Adrenal gland (tissue), 19 donors: ENCODE measurements at regions of chr22 and their contacts with region 1.

Region 1: GRCh38 chr22:24951942-24952836 is at the start of gene KIAA1671:
- DNase-seq: peak; percentile 89 to 94 (median 92)
- H3K4me3 ChIP-seq: peak within 1 kb of the TSS; percentile 47 to 92 (median 68)
- H3K27ac ChIP-seq: peak within 1 kb of the TSS; percentile 85 to 96 (median 87)
- H3K4me1 ChIP-seq: peaks cover 23 to 24% of the 10 kb centered on the region in 2 donors
- H3K27me3 ChIP-seq: no peaks in the 10 kb centered on the region
- CTCF ChIP-seq: peak; percentile 94 to 99 (median 98)
- POLR2A ChIP-seq: peak; percentile 66 to 82
- total RNA-seq, gene KIAA1671: 8.7 to 71.0 (median 51.1) TPM

Region 2: DNA sequence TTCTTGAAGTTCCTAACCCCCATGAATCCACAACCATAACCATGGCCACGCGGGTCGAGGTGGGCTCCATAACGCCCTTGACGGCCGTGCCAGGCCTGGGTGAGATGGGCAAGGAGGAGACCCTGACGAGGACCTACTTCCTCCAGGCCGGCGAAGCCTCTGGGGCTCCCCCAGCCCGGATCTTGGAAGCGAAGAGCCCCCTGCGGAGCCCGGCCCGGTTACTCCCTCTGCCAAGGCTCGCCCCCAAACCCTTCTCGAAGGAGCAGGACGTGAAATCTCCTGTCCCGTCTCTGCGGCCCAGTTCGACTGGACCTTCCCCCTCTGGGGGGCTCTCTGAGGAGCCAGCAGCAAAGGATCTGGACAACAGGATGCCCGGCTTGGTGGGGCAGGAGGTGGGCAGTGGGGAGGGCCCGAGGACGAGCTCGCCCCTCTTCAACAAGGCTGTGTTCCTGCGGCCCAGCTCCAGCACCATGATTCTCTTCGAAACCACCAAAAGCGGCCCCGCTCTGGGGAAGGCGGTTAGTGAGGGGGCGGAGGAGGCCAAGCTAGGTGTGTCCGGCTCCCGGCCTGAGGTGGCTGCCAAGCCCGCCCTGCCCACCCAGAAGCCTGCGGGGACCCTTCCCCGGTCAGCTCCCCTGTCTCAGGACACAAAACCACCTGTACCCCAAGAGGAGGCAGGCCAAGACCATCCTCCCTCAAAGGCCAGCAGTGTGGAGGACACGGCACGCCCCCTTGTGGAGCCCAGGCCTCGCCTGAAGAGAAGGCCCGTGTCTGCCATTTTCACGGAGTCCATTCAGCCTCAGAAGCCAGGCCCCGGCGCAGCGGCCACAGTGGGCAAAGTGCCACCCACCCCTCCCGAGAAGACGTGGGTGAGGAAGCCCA is 76.0 kb after region 1 on chr22:
- intact Hi-C with region 1: loop called in 1 of 2 experiments (anchors 5 kb)
- DNase-seq: peak in 4 of 7 donors; percentile 46 to 69 (median 50)
- H3K4me3 ChIP-seq: no peak overlapping the region
- H3K27ac ChIP-seq: peak overlapping the region in 3 of 5 donors; percentile 9 to 88 (median 22)
- H3K4me1 ChIP-seq: peaks cover 27 to 40% of the 10 kb centered on the region in 2 donors
- H3K27me3 ChIP-seq: no peaks in the 10 kb centered on the region
- CTCF ChIP-seq: peak; percentile 5 to 49 (median 33)
- POLR2A ChIP-seq: no peak

Region 3: GRCh38 chr22:25048659-25049647 is 96.8 kb after region 1 on chr22:
- intact Hi-C with region 1: loop called (anchors 2 to 5 kb)
- DNase-seq: peak; percentile 73 to 87 (median 79)
- H3K4me3 ChIP-seq: no peak overlapping the region
- H3K27ac ChIP-seq: peak overlapping the region in 2 of 5 donors; percentile 35 to 78
- H3K4me1 ChIP-seq: peaks cover 27 to 31% of the 10 kb centered on the region in 2 donors
- H3K27me3 ChIP-seq: no peaks in the 10 kb centered on the region
- CTCF ChIP-seq: peak; percentile 87 to 96 (median 92)
- POLR2A ChIP-seq: no peak